Naive thymus-derived CD8-positive, alpha-beta T cell (primary cell): ENCODE measurements at regions of chr19 and their contacts with region 1.

Region 1: DNA sequence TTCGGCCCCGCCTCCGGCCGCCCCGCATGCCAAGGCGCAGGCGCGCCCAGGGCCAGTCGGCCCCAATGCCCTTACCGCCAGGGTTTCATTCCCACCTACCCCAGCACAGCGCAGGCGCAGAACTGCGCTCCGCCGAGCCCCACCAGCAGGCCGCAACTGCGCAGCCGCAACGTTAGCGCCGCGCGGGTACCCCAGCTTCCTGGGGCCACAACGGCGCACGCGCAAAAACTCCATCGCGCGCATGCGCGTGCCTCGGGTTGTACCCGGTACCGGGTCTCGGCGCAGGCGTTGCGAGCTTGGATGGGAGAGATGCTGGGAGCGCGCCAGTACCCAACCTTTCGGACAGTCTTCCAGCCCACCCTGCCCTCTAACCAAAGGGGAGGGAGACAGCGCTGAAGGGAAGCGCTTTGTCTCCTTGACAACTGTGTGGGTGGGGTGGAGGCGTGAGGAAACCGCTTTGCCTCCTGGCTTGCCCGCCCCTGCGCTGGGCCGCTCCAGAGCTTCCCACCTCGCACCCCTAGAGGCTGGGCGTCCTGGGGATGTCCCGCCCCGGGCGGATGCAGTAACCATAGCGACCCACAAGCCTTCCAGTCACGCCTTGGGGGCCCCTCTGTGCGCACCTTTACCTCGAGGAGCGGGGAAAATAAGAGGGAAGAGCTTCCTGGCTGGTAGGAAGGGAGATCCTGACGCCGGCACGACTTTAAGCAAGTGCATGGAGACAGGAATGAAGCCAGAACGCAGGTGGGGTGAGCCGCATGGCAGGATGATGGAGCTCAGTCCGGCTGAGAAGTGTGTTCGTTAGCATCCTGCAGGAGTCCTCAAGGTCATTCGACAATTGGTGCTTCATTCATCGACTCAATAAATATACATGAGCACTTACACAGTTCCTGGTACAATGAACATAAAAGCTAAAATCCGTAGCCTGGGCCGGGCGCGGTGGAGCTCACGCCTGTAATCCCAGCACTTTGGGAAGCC is 525 bp upstream of the MYPOP start:
- DNase-seq: peak; percentile 98 to 100 (median 100)
- ATAC-seq: peak; percentile 83 to 85
- H3K4me3 Mint-ChIP-seq: peak overlapping the region; percentile 83 to 98 (median 94)
- H3K27ac Mint-ChIP-seq: peak overlapping the region; percentile 67 to 95 (median 90)
- H3K4me1 Mint-ChIP-seq: peaks cover 5 to 26% (median 23%) of the 10 kb centered on the region in 4 donors
- H3K27me3 Mint-ChIP-seq: peaks cover 0 to 3% (median 1%) of the 10 kb centered on the region in 5 donors

Region 2: DNA sequence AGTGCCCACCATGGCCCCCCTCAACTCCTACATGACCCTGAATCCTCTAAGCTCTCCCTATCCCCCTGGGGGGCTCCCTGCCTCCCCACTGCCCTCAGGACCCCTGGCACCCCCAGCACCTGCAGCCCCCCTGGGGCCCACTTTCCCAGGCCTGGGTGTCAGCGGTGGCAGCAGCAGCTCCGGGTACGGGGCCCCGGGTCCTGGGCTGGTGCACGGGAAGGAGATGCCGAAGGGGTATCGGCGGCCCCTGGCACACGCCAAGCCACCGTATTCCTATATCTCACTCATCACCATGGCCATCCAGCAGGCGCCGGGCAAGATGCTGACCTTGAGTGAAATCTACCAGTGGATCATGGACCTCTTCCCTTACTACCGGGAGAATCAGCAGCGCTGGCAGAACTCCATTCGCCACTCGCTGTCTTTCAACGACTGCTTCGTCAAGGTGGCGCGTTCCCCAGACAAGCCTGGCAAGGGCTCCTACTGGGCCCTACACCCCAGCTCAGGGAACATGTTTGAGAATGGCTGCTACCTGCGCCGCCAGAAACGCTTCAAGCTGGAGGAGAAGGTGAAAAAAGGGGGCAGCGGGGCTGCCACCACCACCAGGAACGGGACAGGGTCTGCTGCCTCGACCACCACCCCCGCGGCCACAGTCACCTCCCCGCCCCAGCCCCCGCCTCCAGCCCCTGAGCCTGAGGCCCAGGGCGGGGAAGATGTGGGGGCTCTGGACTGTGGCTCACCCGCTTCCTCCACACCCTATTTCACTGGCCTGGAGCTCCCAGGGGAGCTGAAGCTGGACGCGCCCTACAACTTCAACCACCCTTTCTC is 30.6 kb before region 1 on chr19:
- POLR2A ChIA-PET with region 1: no interaction called
- DNase-seq: no peak
- ATAC-seq: no peak
- H3K4me3 Mint-ChIP-seq: no peak overlapping the region
- H3K27ac Mint-ChIP-seq: no peak overlapping the region
- H3K4me1 Mint-ChIP-seq: peaks cover 4 to 9% (median 8%) of the 10 kb centered on the region in 4 donors
- H3K27me3 Mint-ChIP-seq: peaks cover 10 to 32% (median 19%) of the 10 kb centered on the region in 5 donors

Region 3: GRCh38 chr19:45886427-45887199 is 16.3 kb before region 1 on chr19:
- POLR2A ChIA-PET with region 1: interaction called, 46 read pairs
- DNase-seq: peak; percentile 77 to 94 (median 90)
- ATAC-seq: peak; percentile 65 to 75
- H3K4me3 Mint-ChIP-seq: peak overlapping the region; percentile 91 to 99 (median 98)
- H3K27ac Mint-ChIP-seq: peak overlapping the region; percentile 95 to 100 (median 98)
- H3K4me1 Mint-ChIP-seq: peaks cover 16 to 28% (median 25%) of the 10 kb centered on the region in 4 donors
- H3K27me3 Mint-ChIP-seq: no peaks in the 10 kb centered on the region